ENCODE measurements at regions of chr17 and their contacts with region 1.

Region 1: GRCh38 chr17:2054512-2055291 is at the start of gene HIC1:
- DNase-seq: no peak
- ATAC-seq: peak; percentile 70
- H3K4me3 ChIP-seq: peak within 1 kb of the TSS; percentile 95
- H3K27ac ChIP-seq: peak within 1 kb of the TSS; percentile 84
- H3K4me1 ChIP-seq: peaks cover 14% of the 10 kb centered on the region
- H3K27me3 ChIP-seq: peaks cover 2% of the 10 kb centered on the region in 2 experiments; a peak in 3 of 4 replicates
- CTCF ChIP-seq: peak; percentile 74 to 96 (median 88); a peak in 5 of 6 replicates
- EP300 ChIP-seq: 0 out of 4 replicates have a peak, but pooled peaks of 1 of the 2 experiments have one; percentile 8
- POLR2A ChIP-seq: peak; percentile 94
- RAD21 ChIP-seq: peak; percentile 87
- polyA plus RNA-seq, gene HIC1: 0.11 to 0.57 TPM

Region 2: DNA sequence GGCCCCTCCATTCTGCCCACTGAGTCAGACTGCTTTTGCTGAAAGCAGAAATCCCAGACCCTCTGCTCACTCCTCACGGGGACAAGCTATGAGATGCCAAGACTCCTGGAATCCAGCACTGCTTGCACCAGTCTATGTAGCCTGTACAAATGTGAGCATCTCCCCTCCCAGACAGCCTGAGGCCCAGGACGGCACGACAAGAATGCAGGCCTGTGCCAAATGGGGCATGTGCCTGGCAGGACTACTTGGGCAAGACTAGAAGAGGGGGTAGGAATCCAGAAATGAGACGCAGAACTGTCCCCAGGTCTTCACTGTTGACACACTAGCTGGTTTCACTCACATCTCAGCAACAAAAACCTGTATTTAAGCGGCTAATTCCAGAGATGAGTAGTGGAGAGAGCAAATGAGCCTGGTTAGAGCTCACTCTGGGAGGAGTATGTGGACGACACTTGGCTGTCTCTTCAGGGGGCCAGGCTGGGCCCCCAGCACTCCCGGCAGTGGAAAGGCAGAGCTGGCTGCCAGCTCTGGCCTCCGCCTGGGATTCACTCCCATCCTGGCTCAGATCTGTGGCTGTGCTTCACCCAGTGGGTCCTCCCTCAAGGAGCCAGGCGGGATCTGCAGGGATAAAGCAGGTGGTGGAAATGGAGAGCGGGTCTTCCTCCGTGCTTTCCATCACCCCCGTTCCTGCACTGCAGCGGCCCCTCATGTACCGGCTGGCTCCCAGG is 559.3 kb before region 1 on chr17:
- CTCF ChIA-PET with region 1: no interaction called
- POLR2A ChIA-PET with region 1: no interaction called
- RAD21 ChIA-PET with region 1: no interaction called
- SMC1A ChIA-PET with region 1: no interaction called
- in situ Hi-C with region 1: no loop called
- intact Hi-C with region 1: no loop called
- DNase-seq: no peak
- ATAC-seq: no peak
- H3K4me3 ChIP-seq: no peak overlapping the region
- H3K27ac ChIP-seq: no peak overlapping the region
- H3K4me1 ChIP-seq: peaks cover 7% of the 10 kb centered on the region
- H3K27me3 ChIP-seq: no peaks in the 10 kb centered on the region
- CTCF ChIP-seq: no peak
- EP300 ChIP-seq: no peak
- POLR2A ChIP-seq: no peak
- RAD21 ChIP-seq: no peak

Region 3: GRCh38 chr17:1553354-1554266 is 501.1 kb before region 1 on chr17:
- CTCF ChIA-PET with region 1: no interaction called
- POLR2A ChIA-PET with region 1: no interaction called
- RAD21 ChIA-PET with region 1: no interaction called
- SMC1A ChIA-PET with region 1: no interaction called
- in situ Hi-C with region 1: no loop called
- intact Hi-C with region 1: no loop called
- DNase-seq: no peak
- ATAC-seq: no peak
- H3K4me3 ChIP-seq: no peak overlapping the region
- H3K27ac ChIP-seq: no peak overlapping the region; the same call in 1 of the 2 replicates
- H3K4me1 ChIP-seq: peaks cover 38% of the 10 kb centered on the region
- H3K27me3 ChIP-seq: no peaks in the 10 kb centered on the region
- CTCF ChIP-seq: no peak
- EP300 ChIP-seq: no peak
- POLR2A ChIP-seq: no peak
- RAD21 ChIP-seq: no peak

Region 4: GRCh38 chr17:1752425-1753262 is 302.1 kb before region 1 on chr17:
- CTCF ChIA-PET with region 1: no interaction called
- POLR2A ChIA-PET with region 1: no interaction called
- RAD21 ChIA-PET with region 1: no interaction called
- SMC1A ChIA-PET with region 1: no interaction called
- in situ Hi-C with region 1: no loop called
- intact Hi-C with region 1: no loop called
- DNase-seq: no peak
- ATAC-seq: peak; percentile 71
- H3K4me3 ChIP-seq: no peak overlapping the region
- H3K27ac ChIP-seq: no peak overlapping the region
- H3K4me1 ChIP-seq: no peaks in the 10 kb centered on the region
- H3K27me3 ChIP-seq: no peaks in the 10 kb centered on the region
- CTCF ChIP-seq: 0 out of 6 replicates have a peak, but pooled peaks of 1 of the 3 experiments have one; percentile 11
- EP300 ChIP-seq: no peak
- POLR2A ChIP-seq: no peak
- RAD21 ChIP-seq: no peak

Region 5: GRCh38 chr17:2087597-2088211 is 33.0 kb after region 1 on chr17:
- CTCF ChIA-PET with region 1: interaction called, 106 read pairs
- POLR2A ChIA-PET with region 1: interaction called, 19 read pairs
- RAD21 ChIA-PET with region 1: interaction called, 160 read pairs
- SMC1A ChIA-PET with region 1: interaction called, 45 read pairs
- in situ Hi-C with region 1: no loop called
- intact Hi-C with region 1: loop called (anchors 5 kb)
- DNase-seq: peak; percentile 79
- ATAC-seq: peak; percentile 56
- H3K4me3 ChIP-seq: no peak overlapping the region
- H3K27ac ChIP-seq: peak overlapping the region; percentile 93
- H3K4me1 ChIP-seq: peaks cover 83% of the 10 kb centered on the region
- H3K27me3 ChIP-seq: no peaks in the 10 kb centered on the region
- CTCF ChIP-seq: no peak
- EP300 ChIP-seq: peak; percentile 99
- POLR2A ChIP-seq: no peak; the same call in 1 of the 2 replicates
- RAD21 ChIP-seq: no peak

Region 6: GRCh38 chr17:2172077-2172851 is 117.6 kb after region 1 on chr17:
- CTCF ChIA-PET with region 1: interaction called, 10 read pairs
- POLR2A ChIA-PET with region 1: no interaction called
- RAD21 ChIA-PET with region 1: interaction called, 8 read pairs
- SMC1A ChIA-PET with region 1: interaction called, 3 read pairs
- in situ Hi-C with region 1: no loop called
- intact Hi-C with region 1: loop called (anchors 1 kb)
- DNase-seq: no peak
- ATAC-seq: no peak
- H3K4me3 ChIP-seq: no peak overlapping the region
- H3K27ac ChIP-seq: no peak overlapping the region
- H3K4me1 ChIP-seq: peaks cover 2% of the 10 kb centered on the region; the same call in 1 of the 2 replicates
- H3K27me3 ChIP-seq: no peaks in the 10 kb centered on the region
- CTCF ChIP-seq: no peak
- EP300 ChIP-seq: no peak
- POLR2A ChIP-seq: no peak
- RAD21 ChIP-seq: no peak

Region 7: GRCh38 chr17:2253768-2254406 is 199.2 kb after region 1 on chr17:
- CTCF ChIA-PET with region 1: interaction called, 265 read pairs
- POLR2A ChIA-PET with region 1: interaction called, 9 read pairs
- RAD21 ChIA-PET with region 1: interaction called, 34 read pairs
- SMC1A ChIA-PET with region 1: interaction called, 11 read pairs
- in situ Hi-C with region 1: no loop called
- intact Hi-C with region 1: no loop called
- DNase-seq: peak; percentile 90
- ATAC-seq: peak; percentile 97
- H3K4me3 ChIP-seq: peak overlapping the region; percentile 36; the same call in 1 of the 2 replicates
- H3K27ac ChIP-seq: peak overlapping the region; percentile 90
- H3K4me1 ChIP-seq: peaks cover 36% of the 10 kb centered on the region
- H3K27me3 ChIP-seq: no peaks in the 10 kb centered on the region
- CTCF ChIP-seq: no peak
- EP300 ChIP-seq: peak; percentile 91 to 95
- POLR2A ChIP-seq: peak; percentile 37; the same call in 1 of the 2 replicates
- RAD21 ChIP-seq: peak; percentile 12; the same call in 1 of the 2 replicates

Region 8: GRCh38 chr17:2282297-2282873 is 227.7 kb after region 1 on chr17:
- CTCF ChIA-PET with region 1: interaction called, 109 read pairs
- POLR2A ChIA-PET with region 1: interaction called, 4 read pairs
- RAD21 ChIA-PET with region 1: interaction called, 20 read pairs
- SMC1A ChIA-PET with region 1: interaction called, 44 read pairs
- in situ Hi-C with region 1: no loop called
- intact Hi-C with region 1: no loop called
- DNase-seq: no peak
- ATAC-seq: peak; percentile 50; the same call in 2 of the 3 replicates
- H3K4me3 ChIP-seq: no peak overlapping the region
- H3K27ac ChIP-seq: peak overlapping the region; percentile 37
- H3K4me1 ChIP-seq: 0 out of 2 replicates have a peak, but pooled peaks cover 3% of the 10 kb centered on the region
- H3K27me3 ChIP-seq: no peaks in the 10 kb centered on the region
- CTCF ChIP-seq: peak; percentile 37 to 64 (median 59); a peak in 4 of 6 replicates
- EP300 ChIP-seq: no peak
- POLR2A ChIP-seq: no peak
- RAD21 ChIP-seq: peak; percentile 73

Region 9: DNA sequence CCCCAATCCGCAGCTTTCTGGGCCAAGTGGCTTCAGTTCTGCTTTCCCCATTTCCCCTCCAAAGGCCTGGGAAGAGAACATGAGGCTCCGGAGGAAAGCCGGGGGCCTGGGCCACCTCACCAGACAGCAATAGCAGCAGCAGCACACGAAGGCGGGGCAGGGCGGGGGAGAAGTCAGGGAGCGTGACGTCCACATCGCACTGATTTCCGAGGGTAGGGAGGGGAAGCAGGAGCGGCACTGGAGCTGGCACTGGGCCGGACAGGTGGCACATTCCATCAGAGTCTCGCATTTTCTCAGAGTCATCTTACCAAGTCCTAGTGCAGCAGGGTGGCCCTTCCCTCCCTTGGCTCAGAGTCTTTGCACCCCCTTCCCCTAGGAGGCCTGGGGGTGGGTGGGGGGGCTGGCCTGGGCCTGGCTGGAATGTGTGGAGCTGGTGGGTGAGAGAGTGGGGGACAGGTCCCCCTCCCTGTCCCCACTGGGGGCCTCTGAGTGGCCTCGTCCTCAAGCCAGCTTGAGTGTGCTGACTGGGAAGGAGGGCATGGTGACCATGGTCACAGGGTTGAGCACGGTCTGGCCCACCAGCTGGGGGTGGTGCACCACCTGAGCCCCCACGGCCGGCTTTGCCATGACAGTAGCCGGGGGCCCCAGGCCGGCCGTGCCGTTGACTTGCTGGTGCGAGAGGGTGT is 331.8 kb after region 1 on chr17:
- CTCF ChIA-PET with region 1: interaction called, 14 read pairs
- POLR2A ChIA-PET with region 1: no interaction called
- RAD21 ChIA-PET with region 1: no interaction called
- SMC1A ChIA-PET with region 1: no interaction called
- in situ Hi-C with region 1: no loop called
- intact Hi-C with region 1: no loop called
- DNase-seq: no peak
- ATAC-seq: no peak
- H3K4me3 ChIP-seq: no peak overlapping the region
- H3K27ac ChIP-seq: no peak overlapping the region
- H3K4me1 ChIP-seq: peaks cover 4% of the 10 kb centered on the region; the same call in 1 of the 2 replicates
- H3K27me3 ChIP-seq: no peaks in the 10 kb centered on the region
- CTCF ChIP-seq: no peak
- EP300 ChIP-seq: no peak
- POLR2A ChIP-seq: 0 out of 2 replicates have a peak, but pooled peaks have one; percentile 16
- RAD21 ChIP-seq: no peak

Measured in GM12878 (cell line).